HCT116 (cell line): ENCODE measurements at regions of chr1 and their contacts with region 1.

Region 1: GRCh38 chr1:244652699-244653466 is at the start of gene DESI2:
- DNase-seq: peak; percentile 98
- ATAC-seq: peak; percentile 94
- H3K4me3 ChIP-seq: peak within 1 kb of the TSS; percentile 59 to 74
- H3K27ac ChIP-seq: peak within 1 kb of the TSS; percentile 82
- H3K4me1 ChIP-seq: peaks cover 5 to 23% of the 10 kb centered on the region in 2 experiments; a peak in 3 of 4 replicates
- H3K27me3 ChIP-seq: no peaks in the 10 kb centered on the region
- CTCF ChIP-seq: peak; percentile 38 to 51 (median 48); a peak in 4 of 6 replicates
- POLR2A ChIP-seq: peak; percentile 82
- RAD21 ChIP-seq: peak; percentile 50
- total RNA-seq, gene DESI2: 44.6 TPM

Region 2: GRCh38 chr1:244361764-244362473 is 291.0 kb before region 1 on chr1:
- CTCF ChIA-PET with region 1: no interaction called
- POLR2A ChIA-PET with region 1: no interaction called
- RAD21 ChIA-PET with region 1: no interaction called
- intact Hi-C with region 1: no loop called
- DNase-seq: no peak
- ATAC-seq: no peak
- H3K4me3 ChIP-seq: no peak overlapping the region
- H3K27ac ChIP-seq: no peak overlapping the region
- H3K4me1 ChIP-seq: no peaks in the 10 kb centered on the region
- H3K27me3 ChIP-seq: no peaks in the 10 kb centered on the region
- CTCF ChIP-seq: no peak
- POLR2A ChIP-seq: no peak
- RAD21 ChIP-seq: no peak

Region 3: DNA sequence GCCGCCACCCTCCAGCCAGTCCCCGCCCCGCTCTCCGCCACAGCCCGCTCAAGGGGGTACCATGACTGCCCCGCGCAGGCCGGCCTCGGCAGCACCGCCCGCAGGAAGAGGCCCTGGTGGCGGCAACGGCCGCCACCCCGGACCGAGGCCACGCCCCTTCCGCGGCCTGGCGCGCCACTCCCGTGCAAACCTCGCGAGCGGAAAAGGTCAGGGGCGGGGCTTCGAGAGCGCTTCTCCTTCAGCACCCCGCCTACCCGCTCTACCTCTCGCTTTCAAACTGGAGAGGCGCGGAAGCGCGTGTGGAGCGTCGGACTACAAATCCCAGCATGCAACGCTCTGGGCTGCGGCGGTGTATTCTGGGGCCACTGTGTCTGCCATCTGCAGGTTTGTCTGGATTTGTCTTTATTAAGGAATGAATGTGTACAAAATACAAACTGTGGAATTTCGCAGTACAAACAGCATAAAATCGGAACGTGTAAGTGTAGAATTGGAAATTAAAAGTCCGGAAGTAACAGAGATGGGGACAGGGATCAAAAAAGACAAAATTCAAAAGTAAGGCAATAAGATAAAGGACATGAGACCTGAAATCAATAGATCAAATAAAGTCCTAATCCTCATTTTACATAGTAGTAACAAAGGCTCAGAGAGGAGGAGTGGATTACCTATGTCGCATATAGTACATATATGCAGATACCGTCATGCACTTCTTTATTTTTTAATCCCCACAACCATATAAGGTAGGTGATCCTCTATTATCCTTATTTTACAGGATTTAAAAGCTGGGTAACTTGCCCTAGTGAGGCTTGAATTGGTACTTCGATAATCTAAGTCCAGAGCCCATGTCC is 200.7 kb before region 1 on chr1:
- CTCF ChIA-PET with region 1: no interaction called
- POLR2A ChIA-PET with region 1: no interaction called
- RAD21 ChIA-PET with region 1: no interaction called
- intact Hi-C with region 1: loop called (anchors 2 kb)
- DNase-seq: peak; percentile 98
- ATAC-seq: peak; percentile 96
- H3K4me3 ChIP-seq: peak overlapping the region; percentile 92
- H3K27ac ChIP-seq: peak overlapping the region; percentile 56
- H3K4me1 ChIP-seq: peaks cover 4 to 17% of the 10 kb centered on the region in 2 experiments; a peak in 3 of 4 replicates
- H3K27me3 ChIP-seq: no peaks in the 10 kb centered on the region
- CTCF ChIP-seq: peak; percentile 24 to 43 (median 34); a peak in 5 of 6 replicates
- POLR2A ChIP-seq: no peak
- RAD21 ChIP-seq: peak; percentile 57

Region 4: DNA sequence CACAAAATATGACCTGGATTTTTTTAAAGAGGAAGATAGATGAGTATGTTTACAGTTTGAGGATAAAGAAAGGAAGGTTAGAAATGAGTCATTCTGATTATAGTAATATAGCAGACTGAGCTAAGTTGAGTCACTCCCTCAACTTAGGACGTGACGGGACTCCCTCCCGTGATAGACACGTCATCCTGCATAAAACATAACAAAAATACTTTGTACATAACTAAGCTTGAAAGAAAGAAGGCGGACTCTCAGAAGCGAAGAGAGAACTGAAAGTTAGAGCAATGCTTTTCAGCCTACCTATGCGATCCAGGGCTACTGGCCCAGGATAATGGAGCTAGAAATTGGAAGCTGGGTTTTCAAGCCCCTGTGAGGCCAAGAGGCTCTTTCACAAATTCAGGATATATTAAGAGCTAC is 52.9 kb before region 1 on chr1:
- CTCF ChIA-PET with region 1: no interaction called
- POLR2A ChIA-PET with region 1: no interaction called
- RAD21 ChIA-PET with region 1: no interaction called
- intact Hi-C with region 1: loop called (anchors 1 kb)
- DNase-seq: peak; percentile 74
- ATAC-seq: peak; percentile 88
- H3K4me3 ChIP-seq: peak overlapping the region; percentile 22 to 42
- H3K27ac ChIP-seq: peak overlapping the region; percentile 42; the same call in 1 of the 2 replicates
- H3K4me1 ChIP-seq: peaks cover 7 to 22% of the 10 kb centered on the region in 2 experiments; a peak in 2 of 4 replicates
- H3K27me3 ChIP-seq: no peaks in the 10 kb centered on the region
- CTCF ChIP-seq: no peak
- POLR2A ChIP-seq: no peak
- RAD21 ChIP-seq: no peak